Activated naive CD4-positive, alpha-beta T cell treated with anti-CD3 and anti-CD28 coated beads for 36 hours (primary cell): ENCODE measurements at regions of chr3 and their contacts with region 1.

Region 1: GRCh38 chr3:27681245-27681748 is 40.8 kb downstream of the EOMES start:
- DNase-seq: peak; percentile 28
- H3K4me3 Mint-ChIP-seq: peak overlapping the region; percentile 73
- H3K27ac Mint-ChIP-seq: peak overlapping the region; percentile 83
- H3K4me1 Mint-ChIP-seq: peaks cover 23% of the 10 kb centered on the region
- H3K27me3 Mint-ChIP-seq: peaks cover 2% of the 10 kb centered on the region

Region 2: DNA sequence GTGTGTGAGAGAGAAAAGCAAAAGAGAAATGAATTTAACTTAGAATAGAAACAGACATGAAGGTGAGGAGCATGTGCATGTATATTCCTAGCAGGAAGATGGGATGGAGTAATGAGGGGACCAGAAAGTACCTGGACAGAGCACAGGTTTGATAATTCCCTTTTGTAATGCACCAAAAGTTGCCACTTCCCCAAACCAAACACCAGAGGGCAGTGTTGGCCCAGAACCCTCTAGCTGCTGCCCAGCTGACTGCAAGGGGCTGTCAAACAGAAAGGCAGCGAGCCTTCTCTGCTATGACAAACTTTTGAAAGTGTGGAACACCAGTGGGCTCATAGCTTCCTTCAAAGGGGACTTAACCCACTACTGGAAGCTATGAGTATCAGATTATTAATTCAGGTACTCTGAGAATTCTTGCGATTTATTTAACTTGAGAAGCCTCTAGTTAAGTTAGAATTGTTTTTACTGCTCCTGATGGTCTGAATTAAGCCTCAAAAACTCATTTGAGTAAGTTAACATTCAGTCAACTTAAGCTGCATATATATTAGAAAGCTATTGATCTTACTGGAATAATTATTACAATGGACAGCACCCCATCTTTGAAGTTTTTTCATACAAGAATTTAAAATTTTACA is 547.0 kb before region 1 on chr3:
- CTCF ChIA-PET with region 1: interaction called, 8 read pairs
- intact Hi-C with region 1: loop called (anchors 1 kb)
- DNase-seq: peak; percentile 70
- H3K4me3 Mint-ChIP-seq: no peak overlapping the region
- H3K27ac Mint-ChIP-seq: no peak overlapping the region
- H3K4me1 Mint-ChIP-seq: no peaks in the 10 kb centered on the region
- H3K27me3 Mint-ChIP-seq: peaks cover 1% of the 10 kb centered on the region

Region 3: DNA sequence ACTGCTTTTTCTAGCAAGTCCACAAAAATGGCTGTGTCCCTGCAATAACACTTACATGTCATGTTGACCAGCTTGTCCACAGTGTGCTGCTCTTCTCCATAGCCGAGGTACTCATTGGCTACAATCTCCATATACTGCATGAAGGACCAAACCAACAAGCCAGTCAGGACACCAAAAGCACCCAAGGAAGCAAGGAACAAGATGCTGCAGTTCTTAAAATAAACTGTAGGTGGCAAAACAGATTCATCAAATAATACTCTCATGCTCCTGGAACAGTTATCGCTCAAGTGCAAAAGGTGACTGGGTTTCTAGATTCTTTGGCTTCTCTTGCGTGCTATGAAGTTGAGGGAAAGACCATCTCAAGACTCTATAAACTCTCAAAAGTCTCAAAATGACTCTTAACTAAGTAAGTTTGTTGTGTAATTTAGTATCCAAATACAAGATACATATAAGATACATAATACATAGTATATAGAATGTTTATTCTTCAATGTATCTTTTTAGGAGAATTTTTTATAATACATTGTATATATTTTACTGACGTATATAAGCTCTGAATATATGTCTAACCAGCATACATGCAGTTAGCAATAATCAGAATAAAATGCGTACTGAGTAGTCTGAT is 369.1 kb before region 1 on chr3:
- CTCF ChIA-PET with region 1: interaction called, 9 read pairs
- intact Hi-C with region 1: loop called (anchors 1 kb)
- DNase-seq: peak; percentile 8
- H3K4me3 Mint-ChIP-seq: no peak overlapping the region
- H3K27ac Mint-ChIP-seq: no peak overlapping the region
- H3K4me1 Mint-ChIP-seq: no peaks in the 10 kb centered on the region
- H3K27me3 Mint-ChIP-seq: peaks cover 2% of the 10 kb centered on the region

Region 4: GRCh38 chr3:27357665-27358258 is 323.5 kb before region 1 on chr3:
- CTCF ChIA-PET with region 1: interaction called, 8 read pairs
- intact Hi-C with region 1: loop called (anchors 1 kb)
- DNase-seq: peak; percentile 79
- H3K4me3 Mint-ChIP-seq: no peak overlapping the region
- H3K27ac Mint-ChIP-seq: no peak overlapping the region
- H3K4me1 Mint-ChIP-seq: peaks cover 15% of the 10 kb centered on the region
- H3K27me3 Mint-ChIP-seq: no peaks in the 10 kb centered on the region

Region 5: GRCh38 chr3:27632431-27633223 is 48.7 kb before region 1 on chr3:
- CTCF ChIA-PET with region 1: interaction called, 4 read pairs
- intact Hi-C with region 1: loop called (anchors 1 kb)
- DNase-seq: peak; percentile 42
- H3K4me3 Mint-ChIP-seq: peak overlapping the region; percentile 80
- H3K27ac Mint-ChIP-seq: peak overlapping the region; percentile 22
- H3K4me1 Mint-ChIP-seq: peaks cover 17% of the 10 kb centered on the region
- H3K27me3 Mint-ChIP-seq: no peaks in the 10 kb centered on the region

Region 6: DNA sequence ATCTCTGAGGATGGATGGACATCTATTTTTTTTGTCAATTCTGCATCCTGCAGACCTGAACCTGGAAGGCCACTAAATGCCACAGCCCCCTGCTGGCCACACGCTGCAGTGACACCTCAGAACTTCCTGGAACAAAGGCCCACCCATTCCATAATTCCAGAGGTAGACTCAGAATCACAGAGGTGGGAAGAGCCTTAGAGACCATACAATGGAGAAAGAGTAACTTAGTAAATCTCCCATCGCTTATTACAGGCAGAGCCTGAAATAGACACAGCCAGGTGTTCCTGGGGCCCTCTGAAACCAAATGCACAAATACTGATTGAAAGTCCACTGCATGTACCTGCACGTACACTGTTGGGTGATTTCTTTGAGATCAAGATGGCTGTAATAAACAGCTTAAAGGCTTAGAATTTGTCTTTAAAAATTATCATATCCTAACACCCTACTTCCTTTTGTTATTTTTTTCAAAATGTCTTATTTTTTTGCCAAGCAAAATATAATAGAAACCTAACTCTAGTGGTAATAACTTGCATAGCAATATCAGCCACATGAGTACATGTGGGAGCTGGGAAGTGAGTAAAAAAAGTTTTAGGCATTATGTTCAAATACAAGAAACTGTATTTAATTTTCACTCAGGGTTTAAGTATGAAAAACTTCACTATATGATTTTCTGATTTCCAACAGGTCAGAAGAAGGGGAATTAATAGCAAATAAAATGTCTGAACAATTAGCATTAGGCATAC is 21.8 kb before region 1 on chr3:
- CTCF ChIA-PET with region 1: interaction called, 16 read pairs
- intact Hi-C with region 1: no loop called
- DNase-seq: peak; percentile 43
- H3K4me3 Mint-ChIP-seq: no peak overlapping the region
- H3K27ac Mint-ChIP-seq: no peak overlapping the region
- H3K4me1 Mint-ChIP-seq: peaks cover 2% of the 10 kb centered on the region
- H3K27me3 Mint-ChIP-seq: no peaks in the 10 kb centered on the region

Region 7: DNA sequence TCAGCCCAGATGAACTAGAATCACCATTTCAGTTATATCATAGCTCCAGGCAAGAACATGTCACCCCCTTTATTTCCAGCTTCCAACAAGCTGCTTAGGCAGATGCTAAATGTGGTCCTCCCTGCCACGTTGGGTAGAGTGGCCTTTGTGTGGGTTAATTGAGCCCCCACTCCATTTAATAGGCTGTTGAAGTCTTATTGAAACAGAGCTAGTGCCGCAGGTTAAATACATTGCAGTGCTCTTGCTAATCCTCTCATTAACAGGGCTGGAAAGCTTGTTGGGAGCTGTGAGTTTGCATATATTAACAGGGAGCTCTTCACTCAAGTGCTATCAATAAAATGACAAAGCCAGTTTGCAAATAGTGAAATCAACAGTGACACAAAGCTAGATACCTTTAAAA is 311.8 kb after region 1 on chr3:
- CTCF ChIA-PET with region 1: no interaction called
- intact Hi-C with region 1: no loop called
- DNase-seq: no peak
- H3K4me3 Mint-ChIP-seq: no peak overlapping the region
- H3K27ac Mint-ChIP-seq: no peak overlapping the region
- H3K4me1 Mint-ChIP-seq: no peaks in the 10 kb centered on the region
- H3K27me3 Mint-ChIP-seq: no peaks in the 10 kb centered on the region